CD4-positive, alpha-beta memory T cell (primary cell): ENCODE measurements at regions of chr3 and their contacts with region 1.

Region 1: GRCh38 chr3:157136647-157137387 is 23.1 kb downstream of the CCNL1 start:
- DNase-seq: no peak
- H3K4me3 ChIP-seq: no peak overlapping the region
- H3K4me3 Mint-ChIP-seq: peak overlapping the region in 1 of 8 donors; percentile 81
- H3K27ac ChIP-seq: no peak overlapping the region
- H3K27ac Mint-ChIP-seq: peak overlapping the region in 5 of 7 donors; percentile 30 to 66 (median 61)
- H3K4me1 ChIP-seq: peaks cover 42% of the 10 kb centered on the region
- H3K4me1 Mint-ChIP-seq: peaks cover 19 to 47% (median 38%) of the 10 kb centered on the region in 4 donors
- H3K27me3 ChIP-seq: no peaks in the 10 kb centered on the region
- H3K27me3 Mint-ChIP-seq: no peaks in the 10 kb centered on the region

Region 2: DNA sequence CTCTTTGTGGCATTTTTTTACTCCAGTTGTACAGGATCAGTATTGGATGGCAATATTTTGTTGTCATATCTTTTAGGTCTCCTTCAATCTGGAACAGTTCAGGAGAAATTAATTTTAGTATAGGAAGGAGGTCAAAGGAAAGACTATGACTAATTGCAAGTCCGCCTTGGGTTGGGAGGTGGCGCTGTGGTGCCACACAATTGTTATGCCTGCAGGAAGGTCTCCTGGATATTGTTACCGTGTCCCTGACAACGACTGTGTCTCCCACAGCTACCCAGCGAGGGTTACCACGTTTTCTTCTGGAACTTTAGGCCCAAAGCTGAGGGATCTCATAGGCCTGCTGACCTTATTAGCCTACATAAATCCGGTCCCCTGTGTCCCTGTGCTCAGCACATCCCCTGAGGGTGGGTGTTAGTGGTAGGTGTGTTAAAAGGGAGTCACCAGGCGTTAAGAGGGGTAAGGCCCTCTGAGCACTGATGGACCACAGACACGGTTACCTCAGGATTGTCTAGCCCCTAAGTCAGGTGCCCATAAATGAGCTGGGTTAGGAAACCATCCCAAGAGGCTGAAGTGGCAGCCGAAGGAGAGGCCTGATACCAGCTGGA is 984.9 kb before region 1 on chr3:
- CTCF ChIA-PET with region 1: interaction called, 26 read pairs
- POLR2A ChIA-PET with region 1: no interaction called
- intact Hi-C with region 1: loop called (anchors 1 kb)
- DNase-seq: peak; percentile 40 to 56 (median 45)
- H3K4me3 ChIP-seq: no peak overlapping the region
- H3K4me3 Mint-ChIP-seq: no peak overlapping the region
- H3K27ac ChIP-seq: no peak overlapping the region
- H3K27ac Mint-ChIP-seq: peak overlapping the region in 2 of 7 donors; percentile 31 to 63
- H3K4me1 ChIP-seq: no peaks in the 10 kb centered on the region
- H3K4me1 Mint-ChIP-seq: peaks cover 0 to 1% (median under 1%) of the 10 kb centered on the region in 4 donors
- H3K27me3 ChIP-seq: no peaks in the 10 kb centered on the region
- H3K27me3 Mint-ChIP-seq: peaks cover 0 to 1% of the 10 kb centered on the region in 2 donors

Region 3: DNA sequence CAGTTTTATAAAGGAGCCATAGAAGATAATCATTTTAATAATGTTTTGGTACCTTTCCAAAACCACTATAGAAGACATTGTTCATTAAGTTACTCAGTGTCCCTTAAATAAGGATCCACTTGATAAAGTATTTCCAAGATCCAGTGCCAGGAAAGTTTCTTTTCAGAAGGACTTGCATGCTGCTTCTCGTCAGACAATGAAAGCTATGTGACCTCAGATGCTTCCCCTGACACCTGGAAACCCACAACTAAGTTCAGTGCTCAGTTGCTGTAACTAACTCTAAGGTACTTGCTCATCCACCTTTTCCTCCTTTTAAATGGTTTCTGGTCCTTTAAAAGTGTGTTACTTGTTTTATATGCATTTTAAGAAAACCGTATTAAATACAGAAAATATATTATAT is 589.2 kb before region 1 on chr3:
- CTCF ChIA-PET with region 1: interaction called, 25 read pairs
- POLR2A ChIA-PET with region 1: no interaction called
- intact Hi-C with region 1: loop called (anchors 5 kb)
- DNase-seq: no peak
- H3K4me3 ChIP-seq: no peak overlapping the region
- H3K4me3 Mint-ChIP-seq: no peak overlapping the region
- H3K27ac ChIP-seq: no peak overlapping the region
- H3K27ac Mint-ChIP-seq: peak overlapping the region in 3 of 7 donors; percentile 20 to 84 (median 40)
- H3K4me1 ChIP-seq: peaks cover 20% of the 10 kb centered on the region
- H3K4me1 Mint-ChIP-seq: peaks cover 32 to 53% (median 43%) of the 10 kb centered on the region in 4 donors
- H3K27me3 ChIP-seq: no peaks in the 10 kb centered on the region
- H3K27me3 Mint-ChIP-seq: no peaks in the 10 kb centered on the region

Region 4: GRCh38 chr3:156711113-156711512 is 425.7 kb before region 1 on chr3:
- CTCF ChIA-PET with region 1: interaction called, 16 read pairs
- POLR2A ChIA-PET with region 1: no interaction called
- intact Hi-C with region 1: no loop called
- DNase-seq: no peak
- H3K4me3 ChIP-seq: no peak overlapping the region
- H3K4me3 Mint-ChIP-seq: peak overlapping the region in 1 of 8 donors; percentile 6
- H3K27ac ChIP-seq: no peak overlapping the region
- H3K27ac Mint-ChIP-seq: peak overlapping the region in 2 of 7 donors; percentile 11 to 53
- H3K4me1 ChIP-seq: no peaks in the 10 kb centered on the region
- H3K4me1 Mint-ChIP-seq: peaks cover 6 to 9% (median 8%) of the 10 kb centered on the region in 4 donors
- H3K27me3 ChIP-seq: no peaks in the 10 kb centered on the region
- H3K27me3 Mint-ChIP-seq: no peaks in the 10 kb centered on the region

Region 5: GRCh38 chr3:156847752-156848448 is 288.9 kb before region 1 on chr3:
- CTCF ChIA-PET with region 1: no interaction called
- POLR2A ChIA-PET with region 1: no interaction called
- intact Hi-C with region 1: no loop called
- DNase-seq: no peak
- H3K4me3 ChIP-seq: no peak overlapping the region
- H3K4me3 Mint-ChIP-seq: no peak overlapping the region
- H3K27ac ChIP-seq: no peak overlapping the region
- H3K27ac Mint-ChIP-seq: no peak overlapping the region
- H3K4me1 ChIP-seq: no peaks in the 10 kb centered on the region
- H3K4me1 Mint-ChIP-seq: no peaks in the 10 kb centered on the region
- H3K27me3 ChIP-seq: no peaks in the 10 kb centered on the region
- H3K27me3 Mint-ChIP-seq: peaks cover 0 to 7% of the 10 kb centered on the region in 2 donors

Region 6: GRCh38 chr3:157023226-157023625 is 113.6 kb before region 1 on chr3:
- CTCF ChIA-PET with region 1: no interaction called
- POLR2A ChIA-PET with region 1: no interaction called
- intact Hi-C with region 1: no loop called
- DNase-seq: no peak
- H3K4me3 ChIP-seq: no peak overlapping the region
- H3K4me3 Mint-ChIP-seq: no peak overlapping the region
- H3K27ac ChIP-seq: no peak overlapping the region
- H3K27ac Mint-ChIP-seq: no peak overlapping the region
- H3K4me1 ChIP-seq: no peaks in the 10 kb centered on the region
- H3K4me1 Mint-ChIP-seq: peaks cover 4 to 9% (median 7%) of the 10 kb centered on the region in 4 donors
- H3K27me3 ChIP-seq: no peaks in the 10 kb centered on the region
- H3K27me3 Mint-ChIP-seq: peaks cover 0 to 1% of the 10 kb centered on the region in 2 donors

Region 7: DNA sequence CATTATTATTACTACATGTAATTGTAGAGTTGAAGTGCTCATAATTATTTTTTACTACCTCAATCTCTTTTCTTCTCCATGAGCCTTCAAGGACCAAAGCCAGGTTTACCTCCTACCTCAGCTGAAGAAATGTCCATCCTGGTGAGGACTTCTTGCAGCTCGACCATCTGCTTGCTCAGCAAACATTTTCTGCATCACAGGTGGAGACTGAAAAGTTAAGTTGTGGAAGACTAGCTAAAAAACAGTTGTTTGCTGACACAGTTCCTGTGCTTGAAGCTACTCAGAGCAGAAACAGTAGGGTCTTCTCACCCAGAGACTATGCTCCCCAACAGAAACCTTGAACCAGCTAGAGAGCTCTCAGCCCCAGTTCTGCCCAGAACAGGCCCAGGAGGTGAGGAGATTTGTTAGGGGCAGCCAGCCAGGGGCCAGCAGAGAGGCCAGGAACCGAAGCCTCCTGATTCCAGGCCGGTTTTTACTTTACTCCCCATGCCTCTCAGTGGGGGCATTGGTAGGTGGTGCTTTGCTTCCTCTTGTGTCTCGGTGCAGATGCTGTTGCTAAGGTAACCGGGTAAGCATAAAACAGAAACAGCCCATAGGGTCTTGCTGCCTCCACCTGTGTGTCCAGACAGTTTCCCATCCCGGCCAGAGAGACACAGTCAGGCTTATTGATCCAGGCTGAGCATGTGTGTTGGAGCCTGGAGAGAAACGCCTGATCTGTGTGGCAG is 31.7 kb before region 1 on chr3:
- CTCF ChIA-PET with region 1: interaction called, 346 read pairs
- POLR2A ChIA-PET with region 1: no interaction called
- intact Hi-C with region 1: no loop called
- DNase-seq: peak in 3 of 5 donors; percentile 30 to 37 (median 32)
- H3K4me3 ChIP-seq: no peak overlapping the region
- H3K4me3 Mint-ChIP-seq: peak overlapping the region in 7 of 8 donors; percentile 3 to 57 (median 32)
- H3K27ac ChIP-seq: no peak overlapping the region
- H3K27ac Mint-ChIP-seq: peak overlapping the region; percentile 54 to 96 (median 85)
- H3K4me1 ChIP-seq: peaks cover 30% of the 10 kb centered on the region
- H3K4me1 Mint-ChIP-seq: peaks cover 22 to 38% (median 31%) of the 10 kb centered on the region in 4 donors
- H3K27me3 ChIP-seq: no peaks in the 10 kb centered on the region
- H3K27me3 Mint-ChIP-seq: no peaks in the 10 kb centered on the region

Region 8: GRCh38 chr3:157148196-157148889 is 11.5 kb after region 1 on chr3:
- CTCF ChIA-PET with region 1: interaction called, 36 read pairs
- POLR2A ChIA-PET with region 1: interaction called, 3 read pairs
- intact Hi-C with region 1: no loop called
- DNase-seq: no peak
- H3K4me3 ChIP-seq: no peak overlapping the region
- H3K4me3 Mint-ChIP-seq: no peak overlapping the region
- H3K27ac ChIP-seq: peak overlapping the region; percentile 12
- H3K27ac Mint-ChIP-seq: peak overlapping the region; percentile 68 to 88 (median 75)
- H3K4me1 ChIP-seq: peaks cover 31% of the 10 kb centered on the region
- H3K4me1 Mint-ChIP-seq: peaks cover 19 to 47% (median 29%) of the 10 kb centered on the region in 4 donors
- H3K27me3 ChIP-seq: no peaks in the 10 kb centered on the region
- H3K27me3 Mint-ChIP-seq: no peaks in the 10 kb centered on the region

Region 9: GRCh38 chr3:157190388-157190872 is 53.6 kb after region 1 on chr3:
- CTCF ChIA-PET with region 1: no interaction called
- POLR2A ChIA-PET with region 1: no interaction called
- intact Hi-C with region 1: no loop called
- DNase-seq: no peak
- H3K4me3 ChIP-seq: no peak overlapping the region
- H3K4me3 Mint-ChIP-seq: no peak overlapping the region
- H3K27ac ChIP-seq: no peak overlapping the region
- H3K27ac Mint-ChIP-seq: no peak overlapping the region
- H3K4me1 ChIP-seq: no peaks in the 10 kb centered on the region
- H3K4me1 Mint-ChIP-seq: no peaks in the 10 kb centered on the region
- H3K27me3 ChIP-seq: no peaks in the 10 kb centered on the region
- H3K27me3 Mint-ChIP-seq: no peaks in the 10 kb centered on the region

Region 10: DNA sequence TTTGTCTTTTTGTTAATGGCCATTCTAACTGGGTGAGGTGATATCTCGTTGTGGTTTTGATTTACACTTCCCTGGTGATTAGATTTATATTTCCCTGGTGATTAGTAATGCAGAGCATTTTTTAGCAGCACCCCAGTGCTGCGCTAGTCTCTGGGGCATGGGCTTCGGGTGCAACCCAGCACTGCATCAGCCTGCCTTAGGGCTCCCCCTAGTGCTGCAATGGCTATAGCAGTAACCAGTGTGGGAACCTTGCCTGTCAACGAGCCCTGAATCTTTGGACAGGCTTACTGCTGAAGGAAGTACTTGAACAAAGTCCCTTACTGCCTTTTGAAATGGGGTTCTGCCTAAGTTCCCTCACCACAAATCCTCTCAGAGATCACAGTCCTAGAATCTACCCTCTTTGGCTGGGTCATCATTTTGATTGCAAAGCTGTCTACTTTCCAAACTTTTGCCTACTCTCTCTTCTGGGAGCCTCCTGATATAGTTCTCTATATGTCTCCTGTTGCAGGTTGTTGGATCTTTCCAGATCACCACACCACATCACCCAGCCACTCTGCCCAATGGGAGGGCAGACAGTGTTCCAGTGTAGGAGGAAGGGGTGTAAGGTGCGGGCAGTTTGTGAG is 102.4 kb after region 1 on chr3:
- CTCF ChIA-PET with region 1: interaction called, 3 read pairs
- POLR2A ChIA-PET with region 1: no interaction called
- intact Hi-C with region 1: loop called (anchors 1 kb)
- DNase-seq: peak; percentile 55 to 70 (median 65)
- H3K4me3 ChIP-seq: no peak overlapping the region
- H3K4me3 Mint-ChIP-seq: no peak overlapping the region
- H3K27ac ChIP-seq: no peak overlapping the region
- H3K27ac Mint-ChIP-seq: peak overlapping the region in 2 of 7 donors; percentile 29 to 32
- H3K4me1 ChIP-seq: no peaks in the 10 kb centered on the region
- H3K4me1 Mint-ChIP-seq: peaks cover 0 to 5% (median 3%) of the 10 kb centered on the region in 4 donors
- H3K27me3 ChIP-seq: no peaks in the 10 kb centered on the region
- H3K27me3 Mint-ChIP-seq: peaks cover 1 to 4% of the 10 kb centered on the region in 2 donors